ENCODE measurements at regions of chr1 and their contacts with region 1.

Region 1: GRCh38 chr1:40849801-40850592 is 12.2 kb downstream of the CITED4 start:
- DNase-seq: peak; percentile 71 to 87 (median 86)
- H3K4me3 ChIP-seq: peak overlapping the region in 2 of 7 experiments; percentile 44 to 59
- H3K27ac ChIP-seq: no peak overlapping the region
- H3K4me1 ChIP-seq: peaks cover 6 to 12% (median 10%) of the 10 kb centered on the region in 4 experiments
- H3K27me3 ChIP-seq: no peaks in the 10 kb centered on the region

Region 2: GRCh38 chr1:40796939-40797667 is 52.9 kb before region 1 on chr1:
- CTCF ChIA-PET with region 1: interaction called, 13 read pairs
- POLR2A ChIA-PET with region 1: interaction called, 3 read pairs
- DNase-seq: no peak
- H3K4me3 ChIP-seq: no peak overlapping the region
- H3K27ac ChIP-seq: no peak overlapping the region
- H3K4me1 ChIP-seq: peaks cover 4 to 61% (median 35%) of the 10 kb centered on the region in 4 experiments
- H3K27me3 ChIP-seq: no peaks in the 10 kb centered on the region

Region 3: GRCh38 chr1:40862008-40862863 is 12.2 kb after region 1 on chr1 and contains the start of gene CITED4:
- CTCF ChIA-PET with region 1: interaction called, 11 read pairs
- POLR2A ChIA-PET with region 1: no interaction called
- DNase-seq: peak; percentile 88 to 95 (median 94)
- H3K4me3 ChIP-seq: peak within 1 kb of the TSS; percentile 30 to 81 (median 67)
- H3K27ac ChIP-seq: peak within 1 kb of the TSS in 1 of 2 experiments; percentile 43
- H3K4me1 ChIP-seq: peaks cover 0 to 24% (median 22%) of the 10 kb centered on the region in 4 experiments
- H3K27me3 ChIP-seq: peaks cover 0 to 37% (median 8%) of the 10 kb centered on the region in 5 experiments

Region 4: GRCh38 chr1:40886318-40887011 is 36.5 kb after region 1 on chr1:
- CTCF ChIA-PET with region 1: no interaction called
- POLR2A ChIA-PET with region 1: no interaction called
- DNase-seq: no peak
- H3K4me3 ChIP-seq: no peak overlapping the region
- H3K27ac ChIP-seq: no peak overlapping the region
- H3K4me1 ChIP-seq: peaks cover 0 to 8% (median 4%) of the 10 kb centered on the region in 4 experiments
- H3K27me3 ChIP-seq: peaks cover 5 to 51% (median 17%) of the 10 kb centered on the region in 5 experiments

Region 5: DNA sequence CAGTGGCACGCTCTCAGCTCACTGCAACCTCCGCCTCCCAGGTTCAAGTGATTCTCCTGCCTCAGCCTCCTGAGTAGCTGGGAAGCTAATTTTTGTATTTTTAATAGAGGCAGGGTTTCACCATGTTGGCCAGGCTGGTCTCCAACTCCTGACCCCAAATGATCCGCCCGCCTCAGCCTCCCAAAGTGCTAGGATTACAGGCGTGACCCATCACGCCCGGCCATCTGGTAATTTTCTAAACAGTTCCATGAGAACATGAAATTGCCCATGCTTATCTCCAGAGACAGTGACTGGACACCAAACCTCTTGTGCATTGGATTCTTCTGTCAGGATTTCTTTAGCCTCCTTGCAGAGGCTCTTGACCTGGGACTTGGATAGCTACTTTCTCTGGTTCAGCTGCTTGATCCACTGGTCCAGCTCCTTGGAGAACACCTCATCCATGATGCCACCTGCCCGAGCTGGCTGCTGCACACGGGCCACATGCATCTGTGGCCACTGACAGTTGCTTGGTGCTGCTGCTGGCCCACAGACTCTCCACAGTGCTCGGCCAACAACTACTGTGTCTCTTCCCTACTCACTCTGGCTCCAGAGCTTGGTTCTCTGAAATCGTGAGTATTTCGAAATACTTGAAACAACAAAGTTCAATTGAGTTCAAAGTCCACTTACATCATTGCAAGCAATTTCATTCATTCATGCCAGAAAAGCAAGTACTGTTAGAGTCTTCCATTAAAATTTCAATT is 89.5 kb after region 1 on chr1:
- CTCF ChIA-PET with region 1: no interaction called
- POLR2A ChIA-PET with region 1: no interaction called
- DNase-seq: no peak
- H3K4me3 ChIP-seq: no peak overlapping the region
- H3K27ac ChIP-seq: no peak overlapping the region
- H3K4me1 ChIP-seq: peaks cover 0 to 3% (median 0%) of the 10 kb centered on the region in 4 experiments
- H3K27me3 ChIP-seq: no peaks in the 10 kb centered on the region

Region 6: DNA sequence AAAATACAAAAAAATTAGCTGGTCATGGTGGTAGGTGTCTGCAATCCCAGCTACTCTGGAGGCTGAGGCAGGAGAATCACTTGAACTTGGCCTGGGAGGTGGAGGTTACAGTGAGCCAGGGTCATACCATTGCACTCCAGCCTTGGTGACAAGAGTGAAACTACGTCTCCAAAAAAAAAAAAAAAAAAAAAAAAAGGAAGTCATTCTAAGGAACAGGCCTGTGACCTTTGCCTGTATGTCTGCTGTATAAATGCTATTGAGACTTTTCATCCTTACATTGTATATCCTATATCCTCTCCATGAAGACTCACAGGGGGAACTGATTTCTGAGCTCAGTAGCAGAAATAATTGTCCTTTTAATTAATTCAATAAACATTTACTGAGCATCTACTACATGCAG is 122.0 kb after region 1 on chr1:
- CTCF ChIA-PET with region 1: no interaction called
- POLR2A ChIA-PET with region 1: no interaction called
- DNase-seq: peak in 2 of 3 donors; percentile 32 to 37
- H3K4me3 ChIP-seq: no peak overlapping the region
- H3K27ac ChIP-seq: no peak overlapping the region
- H3K4me1 ChIP-seq: peaks cover 0 to 12% (median 1%) of the 10 kb centered on the region in 4 experiments
- H3K27me3 ChIP-seq: no peaks in the 10 kb centered on the region